ENCODE measurements at regions of chr5 and their contacts with region 1.

Region 1: GRCh38 chr5:142748568-142749249 is 21.5 kb upstream of the ARHGAP26 start:
- DNase-seq: peak; percentile 31 to 70 (median 39)
- H3K4me3 ChIP-seq: no peak overlapping the region
- H3K4me3 Mint-ChIP-seq: no peak overlapping the region
- H3K27ac ChIP-seq: no peak overlapping the region
- H3K27ac Mint-ChIP-seq: peak overlapping the region in 3 of 8 donors; percentile 10 to 51 (median 47)
- H3K4me1 ChIP-seq: no peaks in the 10 kb centered on the region
- H3K4me1 Mint-ChIP-seq: peaks cover 12 to 16% (median 13%) of the 10 kb centered on the region in 3 donors
- H3K27me3 ChIP-seq: no peaks in the 10 kb centered on the region
- H3K27me3 Mint-ChIP-seq: peaks cover 2 to 3% of the 10 kb centered on the region in 2 donors

Region 2: GRCh38 chr5:142720641-142721271 is 28.0 kb before region 1 on chr5:
- CTCF ChIA-PET with region 1: interaction called, 17 read pairs
- POLR2A ChIA-PET with region 1: no interaction called
- DNase-seq: no peak
- H3K4me3 ChIP-seq: no peak overlapping the region
- H3K4me3 Mint-ChIP-seq: no peak overlapping the region
- H3K27ac ChIP-seq: no peak overlapping the region
- H3K27ac Mint-ChIP-seq: peak overlapping the region in 1 of 8 donors; percentile 47
- H3K4me1 ChIP-seq: peaks cover 7% of the 10 kb centered on the region
- H3K4me1 Mint-ChIP-seq: peaks cover 4 to 11% (median 8%) of the 10 kb centered on the region in 3 donors
- H3K27me3 ChIP-seq: no peaks in the 10 kb centered on the region
- H3K27me3 Mint-ChIP-seq: peaks cover 0 to 3% of the 10 kb centered on the region in 2 donors

Region 3: DNA sequence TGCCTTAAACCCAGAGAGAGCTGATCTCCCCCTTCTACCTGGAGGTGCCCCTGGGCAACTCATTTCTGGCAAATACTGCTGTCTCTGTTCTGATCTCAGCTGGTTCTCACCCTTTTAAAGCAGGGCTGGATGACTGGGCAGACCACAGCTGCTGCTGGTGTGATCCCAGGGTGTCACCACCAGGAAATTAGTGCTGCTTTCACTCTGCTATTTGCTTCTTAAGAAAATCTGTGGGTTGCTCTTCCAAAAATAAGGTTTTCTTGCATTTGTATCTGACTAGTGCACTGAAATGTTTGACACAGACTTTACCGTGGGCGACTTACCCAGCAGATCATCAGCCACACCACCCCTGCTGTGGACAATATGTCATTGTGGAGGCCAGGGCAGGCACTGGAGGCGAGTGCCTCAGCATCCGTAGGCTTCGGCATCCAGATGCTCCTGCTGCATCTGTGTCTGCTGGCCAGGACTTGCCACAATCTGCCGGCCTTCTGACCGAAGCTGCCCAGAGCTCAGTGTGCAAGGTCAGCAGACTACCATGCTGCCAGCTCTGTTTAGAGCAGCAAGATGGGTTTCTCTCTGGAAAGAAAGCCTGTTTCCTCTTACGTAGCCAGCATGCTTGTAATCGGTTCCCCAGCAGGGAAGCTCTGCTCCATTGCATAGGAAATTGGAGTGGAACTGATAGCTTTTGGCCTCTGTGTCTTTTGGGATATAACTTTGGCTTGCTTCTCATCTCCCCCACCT is 35.1 kb after region 1 on chr5:
- CTCF ChIA-PET with region 1: interaction called, 10 read pairs
- POLR2A ChIA-PET with region 1: interaction called, 3 read pairs
- DNase-seq: peak in 4 of 5 donors; percentile 33 to 76 (median 49)
- H3K4me3 ChIP-seq: peak overlapping the region; percentile 42
- H3K4me3 Mint-ChIP-seq: peak overlapping the region; percentile 66 to 93 (median 87)
- H3K27ac ChIP-seq: peak overlapping the region; percentile 38
- H3K27ac Mint-ChIP-seq: peak overlapping the region; percentile 72 to 99 (median 93)
- H3K4me1 ChIP-seq: peaks cover 76% of the 10 kb centered on the region
- H3K4me1 Mint-ChIP-seq: peaks cover 89 to 93% (median 91%) of the 10 kb centered on the region in 3 donors
- H3K27me3 ChIP-seq: no peaks in the 10 kb centered on the region
- H3K27me3 Mint-ChIP-seq: no peaks in the 10 kb centered on the region

Region 4: GRCh38 chr5:142860270-142860669 is 111.6 kb after region 1 on chr5:
- CTCF ChIA-PET with region 1: interaction called, 24 read pairs
- POLR2A ChIA-PET with region 1: no interaction called
- DNase-seq: no peak
- H3K4me3 ChIP-seq: no peak overlapping the region
- H3K4me3 Mint-ChIP-seq: no peak overlapping the region
- H3K27ac ChIP-seq: no peak overlapping the region
- H3K27ac Mint-ChIP-seq: peak overlapping the region in 2 of 8 donors; percentile 1 to 66
- H3K4me1 ChIP-seq: peaks cover 11% of the 10 kb centered on the region
- H3K4me1 Mint-ChIP-seq: peaks cover 83 to 92% (median 87%) of the 10 kb centered on the region in 3 donors
- H3K27me3 ChIP-seq: no peaks in the 10 kb centered on the region
- H3K27me3 Mint-ChIP-seq: no peaks in the 10 kb centered on the region

Region 5: DNA sequence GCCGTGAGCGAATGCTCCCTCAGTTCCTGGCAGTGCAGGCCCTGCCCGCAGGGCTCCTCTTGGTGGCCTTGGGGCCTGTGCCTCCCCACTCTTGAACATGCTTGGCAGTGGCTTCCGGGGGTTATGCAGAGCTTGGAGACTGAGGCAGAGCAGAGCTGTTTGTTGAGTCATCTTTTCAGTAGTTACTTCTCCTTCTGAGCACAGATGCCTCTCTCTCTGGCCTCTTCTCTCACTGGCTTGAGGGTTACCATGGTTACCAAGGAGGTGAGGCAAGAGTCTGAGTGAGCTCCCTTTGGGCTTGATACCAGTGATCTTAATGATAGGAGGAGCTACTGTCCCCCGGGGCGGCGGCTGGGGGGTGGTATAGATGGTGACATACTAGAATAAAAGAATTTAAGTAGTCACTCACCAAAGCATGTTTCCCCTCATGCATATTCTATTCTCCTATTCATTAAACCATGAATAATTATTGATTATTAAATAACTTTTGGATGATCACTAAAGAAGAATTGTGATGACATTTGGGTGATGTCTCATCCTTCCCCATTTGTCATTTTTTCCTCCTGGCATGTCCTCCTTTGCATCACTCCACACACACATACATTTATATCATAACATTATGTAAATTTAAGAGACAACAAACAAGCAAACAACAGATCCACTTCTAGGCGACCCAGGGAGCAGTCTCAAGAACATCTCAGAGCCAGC is 132.5 kb after region 1 on chr5:
- CTCF ChIA-PET with region 1: interaction called, 88 read pairs
- POLR2A ChIA-PET with region 1: interaction called, 7 read pairs
- DNase-seq: no peak
- H3K4me3 ChIP-seq: no peak overlapping the region
- H3K4me3 Mint-ChIP-seq: no peak overlapping the region
- H3K27ac ChIP-seq: no peak overlapping the region
- H3K27ac Mint-ChIP-seq: peak overlapping the region in 1 of 8 donors; percentile 70
- H3K4me1 ChIP-seq: no peaks in the 10 kb centered on the region
- H3K4me1 Mint-ChIP-seq: peaks cover 19 to 25% (median 20%) of the 10 kb centered on the region in 3 donors
- H3K27me3 ChIP-seq: no peaks in the 10 kb centered on the region
- H3K27me3 Mint-ChIP-seq: no peaks in the 10 kb centered on the region